ENCODE measurements at regions of chr21 and their contacts with region 1.

Region 1: GRCh38 chr21:29298348-29299045 is at the start of gene BACH1:
- DNase-seq: peak; percentile 68 to 93 (median 83)
- ATAC-seq: peak; percentile 66
- H3K4me3 ChIP-seq: peak within 1 kb of the TSS; percentile 85
- H3K4me3 Mint-ChIP-seq: peak within 1 kb of the TSS; percentile 92
- H3K27ac ChIP-seq: peak within 1 kb of the TSS; percentile 60 to 69
- H3K27ac Mint-ChIP-seq: peak within 1 kb of the TSS; percentile 86
- H3K4me1 ChIP-seq: peaks cover 46% of the 10 kb centered on the region
- H3K4me1 Mint-ChIP-seq: peaks cover 82% of the 10 kb centered on the region
- H3K27me3 ChIP-seq: no peaks in the 10 kb centered on the region
- H3K27me3 Mint-ChIP-seq: no peaks in the 10 kb centered on the region
- CTCF ChIP-seq: peak; percentile 18
- total RNA-seq, gene BACH1: 64.4 to 65.9 TPM

Region 2: DNA sequence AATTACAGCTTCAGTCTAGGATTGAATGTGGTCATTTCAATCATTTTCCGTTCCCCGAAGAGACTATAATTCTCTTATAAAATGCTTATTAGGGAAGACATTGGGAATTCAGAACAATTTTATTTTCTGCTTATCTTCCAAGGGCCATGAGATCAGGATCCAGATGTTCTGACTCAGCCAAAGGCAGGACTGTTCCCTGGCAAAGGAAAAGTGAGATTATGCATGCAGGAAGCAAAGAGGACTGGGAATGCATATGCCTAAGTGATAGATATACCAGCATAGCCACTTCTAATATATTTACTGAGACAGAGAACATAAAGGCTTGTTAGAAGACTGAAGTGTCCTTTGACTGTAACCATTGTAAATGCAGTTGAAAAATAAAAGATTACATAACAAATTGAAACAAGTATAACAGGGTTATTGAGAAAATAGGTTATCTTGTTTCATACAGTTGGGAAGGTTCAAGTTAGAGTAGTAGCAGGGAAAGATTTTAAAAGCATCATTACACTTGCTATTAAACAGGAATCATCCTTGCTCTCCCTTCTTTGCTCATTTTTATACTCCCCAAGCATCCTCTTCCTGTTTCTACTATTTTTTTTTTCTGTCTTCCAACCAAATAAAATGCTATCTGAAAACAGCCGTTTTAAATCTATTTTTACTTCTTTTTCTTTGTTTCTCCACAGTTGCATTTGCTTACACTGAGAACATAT is 1892.0 kb before region 1 on chr21:
- CTCF ChIA-PET with region 1: no interaction called
- POLR2A ChIA-PET with region 1: no interaction called
- intact Hi-C with region 1: no loop called
- DNase-seq: no peak
- ATAC-seq: no peak
- H3K4me3 ChIP-seq: no peak overlapping the region
- H3K4me3 Mint-ChIP-seq: no peak overlapping the region
- H3K27ac ChIP-seq: no peak overlapping the region
- H3K27ac Mint-ChIP-seq: no peak overlapping the region
- H3K4me1 ChIP-seq: no peaks in the 10 kb centered on the region
- H3K4me1 Mint-ChIP-seq: no peaks in the 10 kb centered on the region
- H3K27me3 ChIP-seq: no peaks in the 10 kb centered on the region
- H3K27me3 Mint-ChIP-seq: no peaks in the 10 kb centered on the region
- CTCF ChIP-seq: no peak

Region 3: GRCh38 chr21:28418726-28419514 is 879.6 kb before region 1 on chr21:
- CTCF ChIA-PET with region 1: no interaction called
- POLR2A ChIA-PET with region 1: no interaction called
- intact Hi-C with region 1: no loop called
- DNase-seq: no peak
- ATAC-seq: no peak
- H3K4me3 ChIP-seq: no peak overlapping the region
- H3K4me3 Mint-ChIP-seq: no peak overlapping the region
- H3K27ac ChIP-seq: no peak overlapping the region
- H3K27ac Mint-ChIP-seq: no peak overlapping the region
- H3K4me1 ChIP-seq: no peaks in the 10 kb centered on the region
- H3K4me1 Mint-ChIP-seq: no peaks in the 10 kb centered on the region
- H3K27me3 ChIP-seq: peaks cover 0 to 4% of the 10 kb centered on the region in 2 experiments
- H3K27me3 Mint-ChIP-seq: no peaks in the 10 kb centered on the region
- CTCF ChIP-seq: no peak

Region 4: DNA sequence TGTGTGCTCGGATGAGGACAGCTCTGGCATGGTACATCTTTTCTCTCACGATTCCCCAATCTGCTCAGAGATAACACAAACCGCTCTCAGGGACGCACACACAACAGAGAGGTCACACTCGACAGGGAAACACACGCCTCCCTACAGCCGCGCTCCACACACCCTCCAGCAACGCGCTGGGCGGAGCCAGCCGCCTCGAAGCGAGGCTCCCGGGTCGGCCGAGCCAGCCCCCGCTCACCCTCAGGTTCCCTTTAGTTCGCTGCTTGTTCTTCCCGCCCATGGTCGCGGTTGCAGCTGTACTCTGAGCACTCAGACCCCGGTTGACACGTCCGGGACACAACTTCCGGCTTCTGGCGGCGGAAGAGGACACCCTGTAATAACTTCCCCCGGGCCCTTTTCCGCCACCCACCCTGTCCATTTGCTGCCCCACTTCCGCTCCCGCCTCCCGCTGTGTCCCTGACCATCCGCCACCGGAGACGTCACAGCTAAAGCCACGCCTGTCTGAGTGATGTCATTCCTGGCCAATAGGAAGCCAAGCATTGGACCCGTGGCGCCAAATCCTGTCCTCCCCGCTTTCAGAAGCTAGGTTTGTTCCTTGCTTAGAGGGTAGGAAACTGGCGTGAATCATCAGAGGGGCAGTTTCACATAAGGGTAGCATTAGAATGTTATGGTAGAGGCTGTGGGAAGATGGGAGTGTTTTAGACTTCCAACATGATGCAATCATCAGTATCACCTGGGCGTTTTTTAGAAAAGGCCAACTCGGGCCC is 305.8 kb before region 1 on chr21 and contains the start of gene LTN1:
- CTCF ChIA-PET with region 1: no interaction called
- POLR2A ChIA-PET with region 1: interaction called, 4 read pairs
- intact Hi-C with region 1: loop called (anchors 2 to 10 kb)
- DNase-seq: peak; percentile 97 to 100 (median 98)
- ATAC-seq: peak; percentile 91
- H3K4me3 ChIP-seq: peak within 1 kb of the TSS; percentile 95
- H3K4me3 Mint-ChIP-seq: peak within 1 kb of the TSS; percentile 97
- H3K27ac ChIP-seq: peak within 1 kb of the TSS; percentile 75 to 94
- H3K27ac Mint-ChIP-seq: peak within 1 kb of the TSS; percentile 91
- H3K4me1 ChIP-seq: peaks cover 22% of the 10 kb centered on the region
- H3K4me1 Mint-ChIP-seq: peaks cover 39% of the 10 kb centered on the region
- H3K27me3 ChIP-seq: no peaks in the 10 kb centered on the region
- H3K27me3 Mint-ChIP-seq: no peaks in the 10 kb centered on the region
- CTCF ChIP-seq: no peak
- total RNA-seq, gene LTN1: 23.6 to 24.3 TPM

Region 5: DNA sequence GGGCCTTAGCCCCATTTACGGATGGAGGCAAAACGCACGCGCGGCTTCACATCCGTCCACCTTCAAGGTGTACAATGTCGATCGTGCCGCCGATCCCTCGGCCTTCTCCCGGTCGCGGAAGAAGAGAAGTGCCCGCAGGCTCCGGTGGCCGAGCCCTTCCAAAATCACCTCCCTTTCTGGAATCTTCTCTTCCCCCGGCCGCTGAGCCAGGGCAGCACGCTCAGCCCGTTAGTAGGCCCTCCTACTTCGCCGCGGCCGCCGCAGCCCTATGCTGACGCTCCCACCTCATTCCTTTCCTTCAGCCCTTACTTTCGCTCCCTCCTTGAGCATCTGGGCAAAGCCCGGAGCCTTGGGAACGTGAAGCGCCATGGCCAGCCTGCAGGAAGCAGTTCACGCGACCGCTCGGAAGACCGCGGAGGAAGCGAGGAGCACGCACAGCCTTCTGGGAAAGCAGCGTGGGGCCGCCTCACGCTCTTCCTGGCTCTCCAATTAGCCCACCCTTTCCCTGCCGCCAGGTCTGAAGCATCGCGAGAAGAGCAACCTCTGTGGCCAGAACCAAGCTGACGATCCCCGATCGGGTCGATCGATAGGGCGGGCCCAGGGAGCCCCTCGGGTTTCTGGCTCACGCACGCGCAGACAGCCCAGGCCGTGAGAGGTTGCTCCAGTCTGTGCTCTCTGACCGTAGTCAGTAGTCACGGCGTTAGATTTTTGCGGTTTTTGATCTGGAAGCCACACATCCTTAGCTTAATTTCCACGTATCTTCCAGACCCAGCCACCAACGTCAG is 225.1 kb before region 1 on chr21 and contains the start of gene CCT8:
- CTCF ChIA-PET with region 1: interaction called, 7 read pairs
- POLR2A ChIA-PET with region 1: interaction called, 19 read pairs
- intact Hi-C with region 1: loop called (anchors 2 kb)
- DNase-seq: peak; percentile 96 to 100 (median 98)
- ATAC-seq: peak; percentile 88
- H3K4me3 ChIP-seq: peak within 1 kb of the TSS; percentile 87
- H3K4me3 Mint-ChIP-seq: peak within 1 kb of the TSS; percentile 97
- H3K27ac ChIP-seq: peak within 1 kb of the TSS; percentile 88 to 89
- H3K27ac Mint-ChIP-seq: peak within 1 kb of the TSS; percentile 95
- H3K4me1 ChIP-seq: peaks cover 25% of the 10 kb centered on the region
- H3K4me1 Mint-ChIP-seq: peaks cover 68% of the 10 kb centered on the region
- H3K27me3 ChIP-seq: no peaks in the 10 kb centered on the region
- H3K27me3 Mint-ChIP-seq: no peaks in the 10 kb centered on the region
- CTCF ChIP-seq: no peak
- total RNA-seq, gene CCT8: 121 to 126 TPM

Region 6: GRCh38 chr21:29195981-29196669 is 102.4 kb before region 1 on chr21:
- CTCF ChIA-PET with region 1: no interaction called
- POLR2A ChIA-PET with region 1: interaction called, 3 read pairs
- intact Hi-C with region 1: loop called (anchors 2 to 5 kb)
- DNase-seq: peak; percentile 16 to 91 (median 40)
- ATAC-seq: peak; percentile 97
- H3K4me3 ChIP-seq: peak overlapping the region; percentile 44
- H3K4me3 Mint-ChIP-seq: peak overlapping the region; percentile 55
- H3K27ac ChIP-seq: peak overlapping the region in 1 of 2 donors; percentile 84
- H3K27ac Mint-ChIP-seq: peak overlapping the region; percentile 66
- H3K4me1 ChIP-seq: peaks cover 11% of the 10 kb centered on the region
- H3K4me1 Mint-ChIP-seq: peaks cover 19% of the 10 kb centered on the region
- H3K27me3 ChIP-seq: no peaks in the 10 kb centered on the region
- H3K27me3 Mint-ChIP-seq: no peaks in the 10 kb centered on the region
- CTCF ChIP-seq: peak; percentile 50

Region 7: DNA sequence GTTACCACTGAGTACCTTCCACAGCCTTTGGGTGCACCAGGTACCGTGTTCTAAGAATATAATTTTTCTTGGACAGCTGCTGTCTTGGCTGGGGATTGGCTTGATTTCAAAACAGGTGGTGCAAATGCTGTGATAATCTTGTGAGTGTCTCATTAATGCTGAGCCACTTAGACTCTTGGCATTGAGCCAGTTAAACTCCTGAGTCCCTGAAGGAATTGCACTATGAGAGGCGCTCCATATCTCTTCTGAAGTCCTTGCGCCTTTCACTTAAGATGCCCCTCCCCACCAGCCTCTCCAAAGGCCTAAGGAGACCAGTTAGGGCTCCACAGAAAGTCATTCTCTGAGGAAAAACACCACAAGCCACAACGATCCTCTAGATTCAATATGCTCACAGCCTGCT is 51.2 kb after region 1 on chr21:
- CTCF ChIA-PET with region 1: interaction called, 5 read pairs
- POLR2A ChIA-PET with region 1: interaction called, 4 read pairs
- intact Hi-C with region 1: loop called (anchors 2 to 5 kb)
- DNase-seq: no peak
- ATAC-seq: no peak
- H3K4me3 ChIP-seq: no peak overlapping the region
- H3K4me3 Mint-ChIP-seq: no peak overlapping the region
- H3K27ac ChIP-seq: no peak overlapping the region
- H3K27ac Mint-ChIP-seq: no peak overlapping the region
- H3K4me1 ChIP-seq: peaks cover 9% of the 10 kb centered on the region
- H3K4me1 Mint-ChIP-seq: peaks cover 21% of the 10 kb centered on the region
- H3K27me3 ChIP-seq: no peaks in the 10 kb centered on the region
- H3K27me3 Mint-ChIP-seq: no peaks in the 10 kb centered on the region
- CTCF ChIP-seq: no peak

Region 8: GRCh38 chr21:29394051-29394450 is 95.6 kb after region 1 on chr21:
- CTCF ChIA-PET with region 1: no interaction called
- POLR2A ChIA-PET with region 1: no interaction called
- intact Hi-C with region 1: no loop called
- DNase-seq: no peak
- ATAC-seq: no peak
- H3K4me3 ChIP-seq: no peak overlapping the region
- H3K4me3 Mint-ChIP-seq: no peak overlapping the region
- H3K27ac ChIP-seq: no peak overlapping the region
- H3K27ac Mint-ChIP-seq: no peak overlapping the region
- H3K4me1 ChIP-seq: no peaks in the 10 kb centered on the region
- H3K4me1 Mint-ChIP-seq: no peaks in the 10 kb centered on the region
- H3K27me3 ChIP-seq: no peaks in the 10 kb centered on the region
- H3K27me3 Mint-ChIP-seq: no peaks in the 10 kb centered on the region
- CTCF ChIP-seq: no peak

Region 9: DNA sequence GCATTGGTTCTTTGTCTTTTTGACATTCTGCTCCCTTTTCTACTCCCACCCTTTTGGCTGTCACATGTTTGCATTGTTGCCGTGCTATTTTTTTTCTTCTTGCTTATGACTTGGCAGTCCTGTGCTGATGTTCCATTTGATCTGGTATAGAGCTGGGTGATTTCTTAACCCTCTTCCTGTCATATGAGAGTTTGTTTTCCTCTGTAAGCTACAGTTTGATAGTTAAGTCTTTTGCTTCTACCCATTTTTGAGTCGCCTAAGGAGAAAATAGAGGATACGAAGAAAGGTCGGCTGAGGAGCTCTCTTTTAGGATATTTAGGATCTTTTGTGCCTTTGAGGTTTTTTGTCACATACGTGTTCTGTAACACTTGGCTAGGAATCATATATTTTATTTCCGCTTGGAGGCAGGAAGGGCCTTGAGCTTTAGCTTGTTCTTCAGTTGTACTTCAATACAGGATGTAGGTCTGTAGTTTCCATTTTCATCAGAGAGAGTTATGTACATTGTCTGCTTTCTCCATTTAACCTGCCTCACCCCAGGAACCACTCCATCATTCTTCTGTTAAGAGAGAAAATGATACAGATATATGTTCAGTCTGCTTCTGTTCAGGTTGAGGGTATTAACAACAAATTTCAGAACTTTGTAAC is 150.9 kb after region 1 on chr21:
- CTCF ChIA-PET with region 1: no interaction called
- POLR2A ChIA-PET with region 1: interaction called, 24 read pairs
- intact Hi-C with region 1: no loop called
- DNase-seq: peak in 5 of 14 experiments; percentile 11 to 87 (median 63)
- ATAC-seq: peak; percentile 86
- H3K4me3 ChIP-seq: peak overlapping the region; percentile 1
- H3K4me3 Mint-ChIP-seq: peak overlapping the region; percentile 39
- H3K27ac ChIP-seq: peak overlapping the region; percentile 56 to 67
- H3K27ac Mint-ChIP-seq: peak overlapping the region; percentile 94
- H3K4me1 ChIP-seq: peaks cover 14% of the 10 kb centered on the region
- H3K4me1 Mint-ChIP-seq: peaks cover 40% of the 10 kb centered on the region
- H3K27me3 ChIP-seq: no peaks in the 10 kb centered on the region
- H3K27me3 Mint-ChIP-seq: no peaks in the 10 kb centered on the region
- CTCF ChIP-seq: peak; percentile 15

Measured in CD4-positive, alpha-beta T cell (primary cell).